Esophagus muscularis mucosa (tissue), 4 donors: ENCODE measurements at regions of chr7 and their contacts with region 1.

Region 1: GRCh38 chr7:29946428-29947186 is 43.0 kb downstream of the SCRN1 start:
- DNase-seq: no peak
- H3K4me3 ChIP-seq: no peak overlapping the region
- H3K27ac ChIP-seq: no peak overlapping the region
- H3K4me1 ChIP-seq: peaks cover 0 to 10% (median 0%) of the 10 kb centered on the region in 4 donors
- H3K27me3 ChIP-seq: no peaks in the 10 kb centered on the region
- CTCF ChIP-seq: peak; percentile 33 to 57 (median 37)
- EP300 ChIP-seq: no peak
- POLR2A ChIP-seq: no peak

Region 2: DNA sequence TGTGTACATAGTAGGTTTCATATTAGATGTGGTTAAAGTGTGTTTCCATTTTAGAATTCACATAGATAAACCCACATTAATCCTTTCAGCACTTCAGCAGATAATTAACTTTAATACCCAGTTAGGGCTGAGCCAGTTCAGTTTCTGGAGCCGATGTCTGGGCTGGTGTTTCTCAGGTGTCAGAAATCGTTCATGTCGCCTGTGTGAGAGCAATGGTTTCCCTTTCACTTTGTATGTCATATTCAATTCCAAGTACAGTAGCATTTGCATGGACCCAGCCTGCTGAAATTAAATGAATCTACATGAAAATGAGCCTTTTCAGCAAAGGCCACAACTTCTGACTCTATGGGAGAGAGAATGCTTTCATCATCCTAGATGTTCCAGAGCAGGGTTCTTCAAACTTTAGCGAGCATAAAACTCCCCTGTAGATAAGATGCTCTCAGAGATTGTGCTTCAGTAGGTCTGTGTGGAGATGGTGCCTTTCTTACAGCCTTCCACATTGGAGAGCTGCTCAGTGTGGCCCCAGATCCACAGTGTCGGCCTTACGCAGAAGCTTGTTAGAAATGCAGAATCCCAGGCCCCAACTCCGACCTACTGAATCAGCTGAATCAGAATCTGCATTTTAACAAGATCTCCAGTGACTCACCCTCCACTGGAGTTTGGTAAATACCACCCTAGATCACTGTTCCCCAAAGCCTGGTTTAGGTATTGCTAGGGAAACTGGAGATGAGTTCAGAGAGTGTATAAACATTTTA is 120.7 kb before region 1 on chr7:
- intact Hi-C with region 1: no loop called
- DNase-seq: peak; percentile 57
- H3K4me3 ChIP-seq: no peak overlapping the region
- H3K27ac ChIP-seq: no peak overlapping the region
- H3K4me1 ChIP-seq: no peaks in the 10 kb centered on the region
- H3K27me3 ChIP-seq: peaks cover 0 to 9% (median 0%) of the 10 kb centered on the region in 4 donors
- CTCF ChIP-seq: no peak
- EP300 ChIP-seq: no peak
- POLR2A ChIP-seq: no peak

Region 3: DNA sequence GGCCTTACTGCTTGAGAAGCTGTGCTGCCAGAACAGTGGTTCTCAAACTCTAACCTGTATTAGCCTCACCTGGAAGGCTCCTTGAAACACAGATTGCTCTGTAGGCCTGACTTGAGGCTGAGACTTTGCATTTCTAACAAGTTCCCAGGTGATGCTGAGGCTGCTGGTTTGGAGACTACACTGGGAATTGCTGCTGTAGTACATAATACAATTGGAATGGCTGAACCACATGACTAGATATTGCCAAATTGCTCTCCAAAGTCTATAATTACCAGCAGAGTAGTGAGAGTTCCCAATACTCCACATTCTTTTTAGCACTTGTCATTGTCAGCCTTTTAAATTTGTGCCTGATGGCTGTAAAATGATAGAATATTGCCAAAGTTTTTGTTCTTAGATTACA is 121.5 kb after region 1 on chr7:
- intact Hi-C with region 1: loop called (anchors 5 kb)
- DNase-seq: no peak
- H3K4me3 ChIP-seq: no peak overlapping the region
- H3K27ac ChIP-seq: peak overlapping the region in 2 of 4 donors; percentile 5 to 35
- H3K4me1 ChIP-seq: peaks cover 3 to 13% (median 7%) of the 10 kb centered on the region in 4 donors
- H3K27me3 ChIP-seq: no peaks in the 10 kb centered on the region
- CTCF ChIP-seq: no peak
- EP300 ChIP-seq: no peak
- POLR2A ChIP-seq: no peak